OCI-LY7 (cell line): ENCODE measurements at regions of chr1 and their contacts with region 1.

Region 1: DNA sequence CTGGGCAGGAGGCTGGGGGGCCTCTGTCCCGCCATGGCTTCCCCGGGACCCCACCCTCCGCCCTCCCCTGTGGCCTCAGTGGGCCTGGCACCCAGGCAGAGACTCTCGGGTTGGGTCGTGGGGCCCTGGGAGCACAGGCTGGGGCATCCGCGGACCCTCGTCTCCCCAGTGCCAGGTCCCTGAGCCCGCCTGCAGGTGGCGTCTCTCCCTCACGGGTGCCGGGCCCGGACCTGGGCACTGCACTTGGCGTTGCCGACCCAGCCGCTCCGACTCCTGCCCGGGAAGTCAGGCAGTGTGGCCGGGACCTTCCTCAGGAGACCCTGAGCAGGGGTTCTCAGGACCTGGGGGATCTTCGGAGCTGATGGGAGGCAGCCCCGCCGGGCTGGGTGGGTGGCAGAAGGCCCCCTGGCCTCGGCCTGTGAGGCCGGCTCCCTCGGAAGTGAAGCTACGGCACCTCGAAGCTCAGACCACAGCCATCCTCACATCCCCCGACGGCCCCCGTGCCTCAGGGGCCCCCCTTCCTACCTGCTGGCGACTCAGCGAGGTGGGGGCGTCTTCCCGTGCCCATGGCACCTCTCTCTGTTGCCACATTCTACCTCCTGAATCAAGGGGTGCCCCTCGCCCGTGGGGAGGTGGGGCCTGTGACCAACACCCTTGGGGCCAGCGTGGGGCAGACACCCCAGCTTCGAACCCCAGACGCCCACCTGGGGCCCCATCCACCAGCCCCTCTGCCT is 6.4 kb upstream of the C1orf159 start:
- DNase-seq: peak; percentile 81
- H3K4me3 ChIP-seq: peak overlapping the region; percentile 15
- H3K27ac ChIP-seq: no peak overlapping the region
- H3K4me1 ChIP-seq: no peaks in the 10 kb centered on the region
- CTCF ChIP-seq: peak; percentile 83

Region 2: GRCh38 chr1:1212780-1213344 is 90.6 kb after region 1 on chr1:
- CTCF ChIA-PET with region 1: no interaction called
- POLR2A ChIA-PET with region 1: no interaction called
- intact Hi-C with region 1: loop called (anchors 2 kb)
- DNase-seq: no peak
- H3K4me3 ChIP-seq: no peak overlapping the region
- H3K27ac ChIP-seq: no peak overlapping the region
- H3K4me1 ChIP-seq: no peaks in the 10 kb centered on the region
- CTCF ChIP-seq: no peak

Region 3: GRCh38 chr1:1231400-1232223 is 109.4 kb after region 1 on chr1 and contains the start of gene SDF4:
- CTCF ChIA-PET with region 1: no interaction called
- POLR2A ChIA-PET with region 1: no interaction called
- intact Hi-C with region 1: loop called (anchors 1 kb)
- DNase-seq: peak; percentile 97
- H3K4me3 ChIP-seq: peak within 1 kb of the TSS; percentile 78
- H3K27ac ChIP-seq: peak within 1 kb of the TSS; percentile 43
- H3K4me1 ChIP-seq: peaks cover 28% of the 10 kb centered on the region
- CTCF ChIP-seq: no peak
- total RNA-seq, gene SDF4: 44.2 and 47.7 TPM in 2 replicates

Region 4: GRCh38 chr1:1273512-1274298 is 151.5 kb after region 1 on chr1 and contains the start of gene UBE2J2:
- CTCF ChIA-PET with region 1: interaction called, 11 read pairs
- POLR2A ChIA-PET with region 1: interaction called, 3 read pairs
- intact Hi-C with region 1: no loop called
- DNase-seq: peak; percentile 94
- H3K4me3 ChIP-seq: peak within 1 kb of the TSS; percentile 94
- H3K27ac ChIP-seq: peak within 1 kb of the TSS; percentile 12
- H3K4me1 ChIP-seq: peaks cover 26% of the 10 kb centered on the region
- CTCF ChIP-seq: no peak
- total RNA-seq, gene UBE2J2: 61.6 and 69.2 TPM in 2 replicates

Region 5: DNA sequence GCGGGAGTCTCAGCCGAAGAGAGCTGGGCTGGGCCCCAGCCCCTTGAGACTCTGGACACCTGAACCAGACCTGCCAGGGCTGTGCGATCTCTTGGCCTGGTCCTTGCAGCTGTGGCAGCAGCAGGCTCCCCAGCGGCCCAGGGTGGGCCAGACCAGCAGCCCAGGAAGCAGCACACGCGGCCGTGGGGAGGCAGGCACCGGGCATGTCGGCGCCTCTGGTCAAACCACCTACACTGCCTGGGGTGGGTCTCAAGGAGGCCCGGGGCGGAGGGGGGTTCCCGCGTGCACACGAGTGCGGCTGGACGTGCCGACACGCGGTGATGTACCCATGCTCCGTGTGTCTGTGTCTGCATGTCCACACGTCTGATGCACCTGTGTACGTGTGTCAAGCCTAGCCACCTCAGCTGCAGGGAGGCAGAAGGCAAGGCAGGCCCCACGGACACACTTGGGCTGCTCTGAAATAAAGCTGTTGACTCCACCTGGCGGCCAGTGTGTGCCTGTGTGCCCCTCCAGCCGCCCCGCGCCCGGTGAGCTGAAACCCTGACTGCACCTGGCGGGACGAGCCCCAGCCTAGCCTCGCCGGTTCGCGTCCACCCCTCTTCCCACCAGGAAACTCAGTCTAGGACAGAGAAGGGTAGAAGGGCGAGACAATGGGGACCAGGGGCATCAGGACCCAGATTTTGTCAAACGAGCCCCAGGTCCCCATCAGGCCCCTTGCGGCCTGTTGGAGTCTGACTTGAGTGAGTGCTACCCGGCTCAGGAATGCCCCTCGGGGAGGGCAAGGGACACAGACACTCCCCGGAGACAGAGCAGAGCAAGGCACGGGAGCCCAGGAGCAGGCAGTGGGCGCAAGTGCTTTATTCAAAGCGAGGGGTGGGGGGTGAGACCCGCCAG is 169.6 kb after region 1 on chr1:
- CTCF ChIA-PET with region 1: no interaction called
- POLR2A ChIA-PET with region 1: no interaction called
- intact Hi-C with region 1: loop called (anchors 2 kb)
- DNase-seq: peak; percentile 85
- H3K4me3 ChIP-seq: no peak overlapping the region
- H3K27ac ChIP-seq: no peak overlapping the region
- H3K4me1 ChIP-seq: no peaks in the 10 kb centered on the region
- CTCF ChIP-seq: peak; percentile 85